ENCODE measurements at regions of chr5 and their contacts with region 1.

Region 1: GRCh38 chr5:23419115-23419514 is 88.3 kb upstream of the PRDM9 start:
- DNase-seq: no peak
- ATAC-seq: no peak

Region 2: DNA sequence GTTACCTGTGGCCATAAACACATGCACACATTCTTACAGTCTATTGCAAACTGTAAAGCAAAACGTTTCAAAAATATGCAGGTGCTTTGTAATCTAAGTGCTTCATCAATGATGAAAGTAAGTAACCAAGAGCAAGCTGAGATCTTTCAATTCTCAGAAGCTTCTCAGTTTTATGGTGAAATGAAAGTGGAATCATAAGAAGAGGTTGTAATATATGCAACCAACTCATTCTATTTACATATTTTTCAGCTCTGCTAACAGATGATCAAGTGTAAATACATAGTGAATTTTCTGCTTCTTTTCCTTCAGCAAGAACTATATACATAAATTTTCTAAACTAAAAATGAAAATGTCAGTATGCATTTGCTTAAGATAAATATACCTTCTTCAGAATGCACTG is 55.2 kb after region 1 on chr5:
- intact Hi-C with region 1: loop called in 1 of 2 experiments (anchors 10 kb)
- DNase-seq: no peak
- ATAC-seq: no peak

Measured in left cardiac atrium (tissue), 4 donors.